H1 (cell line): ENCODE measurements at regions of chr10 and their contacts with region 1.

Region 1: DNA sequence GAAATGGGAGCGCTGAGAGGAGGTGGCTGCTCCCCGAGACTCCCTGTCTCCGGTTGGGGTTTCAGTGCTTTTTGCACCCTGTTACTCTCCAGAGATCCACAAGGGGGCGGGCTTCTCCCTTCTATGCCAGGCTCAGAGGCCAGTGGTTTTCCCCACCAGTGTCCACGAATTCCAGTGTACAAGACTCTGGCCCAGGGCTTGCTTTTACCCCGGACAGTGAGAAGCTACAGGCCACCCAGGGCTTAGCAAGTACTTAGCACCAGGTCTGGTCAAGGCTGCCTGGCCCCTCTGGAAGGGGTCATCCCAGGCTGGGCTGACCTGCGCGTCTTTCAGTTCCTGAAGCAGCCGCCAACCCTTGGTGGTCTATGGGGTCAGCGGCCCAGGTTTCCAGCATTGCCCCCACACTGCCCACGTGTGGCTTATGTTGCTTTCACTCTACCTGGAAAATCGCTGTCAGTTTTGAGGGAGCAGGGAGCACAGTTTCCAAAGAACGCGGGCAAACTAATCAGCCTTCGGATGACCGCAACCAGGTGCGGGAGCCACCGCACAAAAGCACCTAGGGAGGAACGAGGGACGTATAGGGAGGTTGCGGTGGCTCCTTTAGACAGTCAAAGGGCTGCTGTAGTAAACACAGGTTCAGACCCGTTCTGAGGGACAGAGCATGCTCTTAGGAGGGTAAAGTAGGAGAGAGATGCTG is 6.8 kb downstream of the CYP26A1 start:
- DNase-seq: peak in 1 of 2 experiments; percentile 85
- H3K4me3 ChIP-seq: no peak overlapping the region
- H3K27ac ChIP-seq: no peak overlapping the region
- H3K4me1 ChIP-seq: peaks cover 3 to 9% (median 5%) of the 10 kb centered on the region in 4 experiments; a peak in 6 of 7 replicates
- H3K27me3 ChIP-seq: peaks cover 11 to 17% (median 15%) of the 10 kb centered on the region in 4 experiments; a peak in 6 of 7 replicates
- CTCF ChIP-seq: peak; percentile 67 to 88 (median 80)
- EP300 ChIP-seq: no peak
- POLR2A ChIP-seq: no peak
- RAD21 ChIP-seq: peak; percentile 91

Region 2: DNA sequence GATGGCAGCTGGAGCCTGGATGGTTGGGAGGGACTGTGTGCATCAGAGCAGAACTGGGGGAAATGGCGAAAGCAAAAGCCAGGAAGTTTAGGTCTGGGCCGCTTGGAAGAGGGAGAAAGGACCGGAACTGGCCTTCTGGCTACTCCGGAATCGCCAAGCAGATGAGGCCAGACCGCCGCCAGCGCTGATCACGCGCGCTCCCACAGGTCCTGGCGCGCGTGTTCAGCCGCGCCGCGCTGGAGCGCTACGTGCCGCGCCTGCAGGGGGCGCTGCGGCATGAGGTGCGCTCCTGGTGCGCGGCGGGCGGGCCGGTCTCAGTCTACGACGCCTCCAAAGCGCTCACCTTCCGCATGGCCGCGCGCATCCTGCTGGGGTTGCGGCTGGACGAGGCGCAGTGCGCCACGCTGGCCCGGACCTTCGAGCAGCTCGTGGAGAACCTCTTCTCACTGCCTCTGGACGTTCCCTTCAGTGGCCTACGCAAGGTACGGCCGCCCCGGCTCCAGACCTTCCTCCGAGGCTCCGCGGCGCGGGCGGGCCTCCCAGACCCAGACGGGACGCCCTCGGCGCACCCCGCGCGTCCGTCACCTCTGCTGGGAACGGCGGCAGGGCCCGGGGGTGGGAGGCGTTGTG is 17.9 kb before region 1 on chr10:
- CTCF ChIA-PET with region 1: interaction called, 147 read pairs
- POLR2A ChIA-PET with region 1: interaction called, 26 read pairs
- DNase-seq: peak in 1 of 2 experiments; percentile 82
- H3K4me3 ChIP-seq: peak overlapping the region; percentile 29 to 59 (median 46)
- H3K27ac ChIP-seq: no peak overlapping the region
- H3K4me1 ChIP-seq: peaks cover 3 to 33% (median 26%) of the 10 kb centered on the region in 4 experiments
- H3K27me3 ChIP-seq: peaks cover 88 to 100% (median 92%) of the 10 kb centered on the region in 4 experiments
- CTCF ChIP-seq: peak; percentile 73 to 82 (median 74)
- EP300 ChIP-seq: no peak
- POLR2A ChIP-seq: no peak
- RAD21 ChIP-seq: peak; percentile 48 to 52; a peak in 3 of 4 replicates

Region 3: DNA sequence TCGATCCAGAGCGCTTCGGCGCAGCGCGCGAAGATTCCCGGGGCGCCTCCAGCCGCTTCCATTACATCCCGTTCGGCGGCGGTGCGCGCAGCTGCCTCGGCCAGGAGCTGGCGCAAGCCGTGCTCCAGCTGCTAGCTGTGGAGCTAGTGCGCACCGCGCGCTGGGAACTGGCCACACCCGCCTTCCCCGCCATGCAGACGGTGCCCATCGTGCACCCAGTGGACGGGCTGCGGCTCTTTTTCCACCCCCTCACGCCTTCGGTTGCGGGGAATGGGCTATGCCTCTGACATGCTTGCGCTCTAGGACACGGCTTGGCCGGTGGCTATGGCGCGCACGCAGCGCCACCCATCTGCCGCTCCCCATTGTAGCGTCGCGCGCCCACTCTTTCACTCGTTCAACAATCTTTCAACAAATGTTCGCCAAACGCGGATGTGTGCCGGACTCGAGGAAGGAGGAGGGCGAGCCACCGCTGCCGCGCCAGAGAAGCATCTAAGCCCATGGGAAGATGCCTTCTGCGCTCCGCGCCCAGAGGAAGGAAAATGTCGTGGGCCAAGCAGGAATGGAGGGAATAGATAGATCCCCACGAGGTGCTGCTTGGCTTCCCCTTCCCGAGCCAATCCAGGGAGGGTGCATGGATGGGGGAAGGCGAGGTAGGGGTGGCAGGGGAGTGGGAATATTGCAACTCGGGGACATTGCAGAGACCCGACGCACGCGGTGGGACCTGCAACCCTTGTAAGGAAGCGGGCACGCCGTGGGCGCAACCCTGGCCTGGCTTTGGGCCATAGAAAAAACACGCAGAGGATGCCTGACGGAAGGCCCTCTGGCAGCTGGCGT is 11.9 kb before region 1 on chr10:
- CTCF ChIA-PET with region 1: interaction called, 147 read pairs
- POLR2A ChIA-PET with region 1: interaction called, 26 read pairs
- DNase-seq: peak in 1 of 2 experiments; percentile 82
- H3K4me3 ChIP-seq: peak overlapping the region; percentile 29 to 52 (median 38)
- H3K27ac ChIP-seq: no peak overlapping the region
- H3K4me1 ChIP-seq: peaks cover 0 to 32% (median 22%) of the 10 kb centered on the region in 4 experiments; a peak in 6 of 7 replicates
- H3K27me3 ChIP-seq: peaks cover 96 to 100% (median 99%) of the 10 kb centered on the region in 4 experiments
- CTCF ChIP-seq: peak in 2 of 3 experiments; percentile 17 to 39; a peak in 3 of 4 replicates
- EP300 ChIP-seq: no peak
- POLR2A ChIP-seq: no peak
- RAD21 ChIP-seq: peak in 1 of 2 experiments; percentile 28; a peak in 1 of 4 replicates

Region 4: GRCh38 chr10:93097386-93097785 is 16.9 kb after region 1 on chr10:
- CTCF ChIA-PET with region 1: interaction called, 39 read pairs
- POLR2A ChIA-PET with region 1: no interaction called
- DNase-seq: no peak
- H3K4me3 ChIP-seq: no peak overlapping the region
- H3K27ac ChIP-seq: no peak overlapping the region
- H3K4me1 ChIP-seq: peaks cover 0 to 2% (median 0%) of the 10 kb centered on the region in 4 experiments; a peak in 1 of 7 replicates
- H3K27me3 ChIP-seq: no peaks in the 10 kb centered on the region
- CTCF ChIP-seq: no peak
- EP300 ChIP-seq: no peak
- POLR2A ChIP-seq: no peak
- RAD21 ChIP-seq: no peak

Region 5: DNA sequence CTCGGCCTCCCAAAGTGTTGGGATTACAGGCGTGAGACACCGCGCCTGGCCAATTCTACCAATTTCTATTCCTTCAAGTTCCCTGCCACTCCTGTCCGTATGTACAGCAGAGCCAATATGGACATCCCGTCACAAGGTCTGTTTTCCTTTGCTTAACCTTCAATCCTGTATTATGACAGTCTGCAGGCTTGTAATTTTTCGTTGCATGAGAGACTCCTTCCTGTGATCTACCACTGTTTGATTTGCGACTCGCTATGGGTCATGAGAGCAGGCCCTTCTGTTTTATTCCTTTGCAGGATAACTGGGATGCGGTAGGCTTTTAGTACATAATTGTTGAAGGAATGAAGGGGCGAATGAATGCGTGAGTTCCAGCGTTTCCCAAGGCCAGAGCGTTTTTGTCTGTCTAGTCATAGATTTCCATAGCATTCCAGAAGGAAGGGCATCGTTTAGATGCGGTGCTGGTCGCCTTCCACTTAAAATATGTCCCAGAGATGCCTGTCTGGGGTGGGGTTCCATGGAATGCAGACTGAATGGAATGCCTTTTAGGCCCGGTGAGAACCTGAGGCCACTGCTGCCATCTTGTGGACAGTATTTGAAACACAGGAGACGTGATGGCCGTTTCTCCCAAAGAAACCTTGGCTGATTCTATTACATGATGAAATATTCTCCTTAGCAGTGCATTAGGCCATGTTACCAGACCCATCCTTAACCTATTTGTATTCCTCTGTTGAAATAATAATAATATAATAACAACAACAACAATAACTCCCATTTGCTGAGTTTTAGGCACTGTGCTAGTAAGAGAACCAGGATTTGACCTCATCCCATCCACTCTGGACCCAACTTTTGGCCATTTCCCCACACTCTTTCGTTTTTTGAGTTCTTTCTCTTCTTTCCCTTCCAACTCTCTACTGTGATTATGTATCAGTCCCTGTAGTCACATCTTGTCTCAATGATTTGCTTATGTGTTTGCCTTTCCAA is 208.4 kb after region 1 on chr10:
- CTCF ChIA-PET with region 1: interaction called, 25 read pairs
- POLR2A ChIA-PET with region 1: no interaction called
- DNase-seq: peak; percentile 85
- H3K4me3 ChIP-seq: no peak overlapping the region; a peak in 1 of 8 replicates
- H3K27ac ChIP-seq: peak overlapping the region; percentile 52; the same call in 1 of the 2 replicates
- H3K4me1 ChIP-seq: peaks cover 0 to 11% (median 3%) of the 10 kb centered on the region in 4 experiments; a peak in 5 of 7 replicates
- H3K27me3 ChIP-seq: no peaks in the 10 kb centered on the region; a peak in 1 of 7 replicates
- CTCF ChIP-seq: peak; percentile 60 to 87 (median 86)
- EP300 ChIP-seq: peak in 1 of 2 experiments; percentile 45; a peak in 1 of 3 replicates
- POLR2A ChIP-seq: no peak
- RAD21 ChIP-seq: peak; percentile 97 to 98